GM10248 (cell line): ENCODE measurements at regions of chr1 and their contacts with region 1.

Region 1: DNA sequence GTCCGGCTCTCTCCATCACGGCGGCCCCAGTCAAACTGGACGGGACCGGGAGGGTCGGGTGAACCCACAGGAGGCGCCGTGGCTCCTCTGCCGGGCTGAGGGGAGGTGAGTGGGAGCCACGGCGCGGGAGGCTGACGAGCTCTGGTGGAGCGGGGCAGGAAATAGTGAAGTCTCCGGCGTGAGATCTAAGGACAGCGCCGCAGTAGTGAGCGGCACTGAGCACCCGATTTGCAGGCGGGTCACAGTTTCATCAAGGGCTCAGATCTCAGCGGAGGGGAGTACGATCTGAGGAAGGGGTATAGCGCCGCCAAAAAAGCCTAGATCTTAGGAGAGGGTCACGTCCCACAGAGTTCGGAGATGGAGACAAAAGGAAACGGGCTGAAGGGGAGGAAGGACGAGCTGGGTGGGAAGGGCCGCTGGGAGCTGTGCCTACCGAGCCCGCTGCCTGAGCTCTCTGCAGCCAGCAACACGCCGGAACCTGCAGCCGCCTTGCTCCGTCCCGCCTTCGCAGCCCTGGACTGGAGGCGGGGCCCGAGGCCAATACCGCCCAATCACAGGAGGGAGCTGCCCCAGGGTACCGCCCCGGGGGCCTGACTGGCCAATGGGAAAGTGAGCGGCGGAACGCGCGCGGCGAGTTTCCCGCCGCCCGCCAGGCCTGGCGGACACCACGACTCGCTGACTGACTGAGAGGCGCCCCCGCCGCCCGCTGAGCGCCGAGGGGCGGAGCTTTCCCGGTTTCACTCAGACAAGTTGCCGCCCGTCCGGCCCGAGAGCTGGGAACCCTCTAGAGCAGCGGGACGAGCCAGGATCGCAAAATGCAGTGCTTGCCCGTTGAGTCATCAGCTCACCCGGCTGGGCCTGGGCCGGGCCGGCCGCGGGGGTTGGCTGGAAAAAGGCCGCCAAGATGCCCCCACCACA is 1.9 kb downstream of the SFN start:
- DNase-seq: peak; percentile 96
- CTCF ChIP-seq: peak; percentile 7

Region 2: GRCh38 chr1:26833432-26834405 is 31.1 kb before region 1 on chr1:
- CTCF ChIA-PET with region 1: interaction called, 18 read pairs
- POLR2A ChIA-PET with region 1: interaction called, 10 read pairs
- DNase-seq: peak; percentile 91
- CTCF ChIP-seq: peak; percentile 47

Region 3: GRCh38 chr1:26853156-26853555 is 11.7 kb before region 1 on chr1:
- CTCF ChIA-PET with region 1: interaction called, 72 read pairs
- POLR2A ChIA-PET with region 1: interaction called, 8 read pairs
- DNase-seq: peak; percentile 82
- CTCF ChIP-seq: peak; percentile 70

Region 4: GRCh38 chr1:26882696-26883463 is 18.0 kb after region 1 on chr1:
- CTCF ChIA-PET with region 1: interaction called, 70 read pairs
- POLR2A ChIA-PET with region 1: interaction called, 3 read pairs
- DNase-seq: no peak
- CTCF ChIP-seq: no peak

Region 5: GRCh38 chr1:26889551-26890466 is 24.9 kb after region 1 on chr1 and contains the start of gene GPN2:
- CTCF ChIA-PET with region 1: interaction called, 7 read pairs
- POLR2A ChIA-PET with region 1: interaction called, 11 read pairs
- DNase-seq: peak; percentile 94
- CTCF ChIP-seq: no peak

Region 6: GRCh38 chr1:27616441-27616840 is 751.6 kb after region 1 on chr1:
- CTCF ChIA-PET with region 1: no interaction called
- POLR2A ChIA-PET with region 1: no interaction called
- DNase-seq: no peak
- CTCF ChIP-seq: peak; percentile 23

Region 7: DNA sequence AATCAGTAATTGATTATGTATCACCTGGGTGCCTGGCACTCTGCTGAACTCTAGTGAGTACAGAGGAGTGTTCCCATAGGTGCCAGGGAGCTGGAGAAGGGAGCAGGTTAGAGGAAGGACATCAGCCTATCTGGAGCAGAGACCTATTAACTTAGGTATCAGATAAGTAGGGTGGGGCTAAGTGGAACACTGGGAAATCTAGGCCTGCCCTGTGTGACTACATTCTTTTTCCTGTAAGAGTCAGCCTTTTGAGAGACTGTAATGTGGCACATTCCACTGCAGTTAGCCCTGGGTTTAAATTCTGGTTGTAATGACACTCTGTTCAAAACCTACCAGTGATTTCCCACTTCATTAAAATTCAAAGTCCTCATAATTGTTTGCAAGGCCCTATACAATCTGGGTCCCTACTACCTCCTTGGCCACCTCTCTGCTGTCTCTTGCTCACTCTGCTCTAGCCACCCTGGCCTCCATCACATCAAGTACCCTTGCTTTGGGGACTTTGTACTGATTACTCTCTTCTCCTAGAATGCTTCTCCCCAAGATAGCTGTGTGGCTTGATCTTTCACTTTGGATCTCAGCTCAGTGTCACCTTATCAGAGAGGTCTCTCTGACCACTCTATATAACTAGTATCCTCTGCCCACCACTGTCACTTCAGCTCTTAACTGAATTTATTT is 921.0 kb after region 1 on chr1:
- CTCF ChIA-PET with region 1: no interaction called
- POLR2A ChIA-PET with region 1: no interaction called
- DNase-seq: no peak
- CTCF ChIP-seq: no peak